CD8-positive, alpha-beta T cell (primary cell): ENCODE measurements at regions of chr7 and their contacts with region 1.

Region 1: GRCh38 chr7:7309203-7309602 is 126.9 kb downstream of the C1GALT1 start:
- DNase-seq: no peak
- ATAC-seq: no peak
- H3K4me3 ChIP-seq: no peak overlapping the region
- H3K4me3 Mint-ChIP-seq: no peak overlapping the region
- H3K27ac ChIP-seq: no peak overlapping the region
- H3K27ac Mint-ChIP-seq: no peak overlapping the region
- H3K4me1 ChIP-seq: no peaks in the 10 kb centered on the region
- H3K4me1 Mint-ChIP-seq: no peaks in the 10 kb centered on the region
- H3K27me3 ChIP-seq: no peaks in the 10 kb centered on the region
- H3K27me3 Mint-ChIP-seq: no peaks in the 10 kb centered on the region
- CTCF ChIP-seq: no peak

Region 2: GRCh38 chr7:7157177-7157886 is 151.9 kb before region 1 on chr7:
- CTCF ChIA-PET with region 1: no interaction called
- POLR2A ChIA-PET with region 1: no interaction called
- intact Hi-C with region 1: no loop called
- DNase-seq: peak; percentile 23 to 88 (median 68)
- ATAC-seq: peak; percentile 94
- H3K4me3 ChIP-seq: peak overlapping the region; percentile 39 to 42
- H3K4me3 Mint-ChIP-seq: peak overlapping the region; percentile 75
- H3K27ac ChIP-seq: peak overlapping the region; percentile 32 to 68
- H3K27ac Mint-ChIP-seq: peak overlapping the region; percentile 85
- H3K4me1 ChIP-seq: peaks cover 58% of the 10 kb centered on the region
- H3K4me1 Mint-ChIP-seq: peaks cover 61% of the 10 kb centered on the region
- H3K27me3 ChIP-seq: no peaks in the 10 kb centered on the region
- H3K27me3 Mint-ChIP-seq: no peaks in the 10 kb centered on the region
- CTCF ChIP-seq: no peak

Region 3: GRCh38 chr7:7276161-7276560 is 33.0 kb before region 1 on chr7:
- CTCF ChIA-PET with region 1: no interaction called
- POLR2A ChIA-PET with region 1: no interaction called
- intact Hi-C with region 1: loop called in 1 of 2 experiments (anchors 2 kb)
- DNase-seq: no peak
- ATAC-seq: no peak
- H3K4me3 ChIP-seq: no peak overlapping the region
- H3K4me3 Mint-ChIP-seq: no peak overlapping the region
- H3K27ac ChIP-seq: no peak overlapping the region
- H3K27ac Mint-ChIP-seq: no peak overlapping the region
- H3K4me1 ChIP-seq: no peaks in the 10 kb centered on the region
- H3K4me1 Mint-ChIP-seq: no peaks in the 10 kb centered on the region
- H3K27me3 ChIP-seq: no peaks in the 10 kb centered on the region
- H3K27me3 Mint-ChIP-seq: peaks cover 2% of the 10 kb centered on the region
- CTCF ChIP-seq: no peak